BJ (cell line): ENCODE measurements at regions of chr13 and their contacts with region 1.

Region 1: DNA sequence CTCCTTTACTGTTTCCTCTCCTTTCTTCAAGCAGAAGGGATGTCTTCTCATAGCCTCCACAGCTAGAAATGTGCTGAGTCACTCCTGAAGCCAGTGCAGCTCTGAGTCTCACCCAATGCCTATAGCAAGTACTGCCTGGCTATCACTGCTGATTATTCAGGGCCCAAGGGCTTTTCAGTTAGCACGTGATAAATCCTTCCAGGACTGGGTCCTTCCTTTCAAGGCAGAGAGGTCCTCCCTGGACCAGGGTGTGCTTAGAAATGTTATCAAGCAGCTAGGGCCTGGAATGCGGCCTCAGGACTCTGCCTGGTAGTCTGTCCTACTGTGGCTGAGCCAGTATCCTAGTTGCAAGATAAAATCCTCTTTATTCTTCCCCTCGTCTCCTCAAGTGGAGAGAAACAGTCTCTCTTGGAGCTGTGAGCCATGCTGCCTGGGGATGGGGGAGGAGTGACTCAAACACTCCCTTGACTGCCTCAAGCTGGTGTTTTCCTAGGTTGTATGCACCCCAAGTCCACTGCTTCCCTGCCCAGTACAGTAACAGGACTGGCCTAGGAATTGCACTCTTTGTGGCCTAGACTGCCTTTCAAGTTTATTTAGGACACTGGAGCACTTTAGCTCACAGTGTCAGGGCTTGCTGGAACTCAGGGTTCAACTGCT is 198.7 kb upstream of the SERP2 start:
- DNase-seq: no peak
- H3K4me3 ChIP-seq: no peak overlapping the region
- H3K27me3 ChIP-seq: 0 out of 2 replicates have a peak, but pooled peaks cover 2% of the 10 kb centered on the region
- CTCF ChIP-seq: no peak

Region 2: DNA sequence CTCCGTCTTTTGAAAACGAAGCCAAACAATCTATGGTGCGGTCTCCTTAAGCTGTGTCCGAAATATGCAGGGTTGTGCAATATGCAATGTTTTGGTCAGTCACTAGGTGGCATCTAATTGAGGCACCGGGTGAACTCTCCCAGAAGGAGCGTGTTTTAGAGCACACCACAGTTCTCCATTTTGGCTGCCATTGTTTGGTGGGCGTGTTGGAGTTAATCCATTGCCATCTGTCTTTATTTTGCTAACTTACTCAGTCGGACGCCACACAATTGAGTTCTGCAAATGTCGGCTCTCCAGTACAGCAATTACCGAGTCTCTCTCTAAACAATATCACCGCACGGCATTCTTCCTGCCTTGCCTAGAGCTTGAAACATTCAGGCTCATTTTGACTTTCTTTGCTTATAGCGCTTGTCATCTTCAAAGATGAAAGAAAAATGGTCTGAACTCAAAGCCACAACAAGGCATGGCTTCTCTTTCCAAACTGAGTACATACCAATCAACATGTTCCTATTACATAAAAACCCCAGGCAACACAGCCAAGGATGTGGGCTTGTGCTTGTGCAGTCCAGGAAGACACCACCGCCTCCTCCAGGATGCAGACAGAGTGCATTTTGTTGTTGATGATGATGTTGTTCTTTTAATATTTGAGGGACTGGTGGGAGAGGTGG is 16.7 kb after region 1 on chr13:
- CTCF ChIA-PET with region 1: interaction called, 13 read pairs
- POLR2A ChIA-PET with region 1: no interaction called
- DNase-seq: peak; percentile 46
- H3K4me3 ChIP-seq: no peak overlapping the region
- H3K27me3 ChIP-seq: peaks cover 3% of the 10 kb centered on the region
- CTCF ChIP-seq: peak; percentile 77

Region 3: DNA sequence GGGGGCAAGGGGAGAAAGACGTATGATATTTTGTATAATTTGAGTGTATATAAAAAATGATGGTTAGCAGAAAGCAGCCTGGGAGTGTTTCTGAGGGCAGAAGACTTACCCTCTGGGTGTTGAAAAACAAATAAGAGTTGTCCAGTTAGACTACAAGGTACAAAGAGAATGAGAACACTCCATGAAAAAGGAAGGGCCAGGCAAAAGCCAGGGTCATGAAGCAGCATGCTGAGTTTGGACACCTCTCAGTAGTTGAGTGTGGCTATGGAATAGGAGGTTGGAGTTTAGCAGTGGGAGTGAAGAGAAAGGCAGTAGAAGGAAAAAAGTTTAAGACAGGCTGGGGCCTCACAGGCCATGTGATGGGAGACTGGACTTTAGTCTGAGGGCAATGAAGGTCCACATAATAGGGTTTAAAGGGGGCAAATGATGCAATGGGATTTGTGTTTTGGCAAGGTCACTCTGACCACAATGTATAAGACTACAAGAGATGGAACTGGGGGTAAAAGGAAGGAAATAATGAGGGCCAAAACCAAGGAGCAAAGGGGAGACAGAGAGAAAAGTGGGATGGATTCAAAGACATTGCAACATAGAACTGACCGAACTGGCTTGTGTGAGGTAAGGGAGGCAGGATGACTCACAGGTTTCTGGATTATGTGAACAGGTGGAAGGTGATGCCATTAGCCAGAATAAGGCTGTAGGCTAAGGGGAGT is 275.3 kb after region 1 on chr13:
- CTCF ChIA-PET with region 1: no interaction called
- POLR2A ChIA-PET with region 1: no interaction called
- DNase-seq: no peak
- H3K4me3 ChIP-seq: no peak overlapping the region
- H3K27me3 ChIP-seq: no peaks in the 10 kb centered on the region
- CTCF ChIP-seq: no peak

Region 4: DNA sequence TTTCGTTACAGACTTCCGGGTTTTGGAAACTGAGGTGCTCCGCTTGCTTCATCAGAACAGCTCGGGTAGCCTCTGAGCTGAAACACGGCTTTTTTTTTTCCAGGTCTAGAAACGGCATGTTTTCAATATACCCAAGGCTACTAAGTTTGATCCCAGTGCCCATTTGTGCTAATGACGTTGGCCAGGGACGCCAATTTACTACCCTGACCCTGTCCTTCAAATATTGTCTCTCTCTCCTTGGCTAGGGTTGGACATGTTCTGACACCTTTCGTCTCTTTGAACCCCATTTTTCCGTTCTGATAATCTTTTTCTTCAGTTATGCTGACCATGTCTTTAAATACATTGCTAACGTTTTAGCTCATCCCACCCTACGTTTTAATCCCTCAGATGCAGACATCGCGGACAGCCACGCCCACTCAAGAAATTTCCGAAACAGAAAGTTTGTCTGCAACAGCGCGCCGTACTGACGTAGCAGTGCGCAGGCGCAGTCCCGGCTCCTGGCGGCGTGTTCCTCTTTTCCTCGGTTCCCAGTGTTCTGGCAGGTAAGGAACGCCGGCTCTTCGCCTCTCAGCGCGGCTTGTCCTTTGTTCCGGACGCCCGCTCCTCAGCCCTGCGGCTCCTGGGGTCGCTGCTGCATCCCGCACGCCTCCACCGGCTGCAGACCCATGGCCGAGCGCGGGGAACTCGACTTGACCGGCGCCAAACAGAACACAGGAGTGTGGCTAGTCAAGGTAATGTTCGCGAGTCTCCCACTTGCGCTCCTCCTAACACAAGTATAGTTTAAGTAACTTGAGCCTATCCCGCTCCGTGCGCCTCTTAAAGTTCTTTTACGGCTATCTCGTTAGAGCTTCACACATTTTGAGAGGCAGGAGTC is 945.3 kb after region 1 on chr13 and contains the start of gene GTF2F2:
- CTCF ChIA-PET with region 1: no interaction called
- POLR2A ChIA-PET with region 1: no interaction called
- DNase-seq: peak; percentile 55
- H3K4me3 ChIP-seq: peak within 1 kb of the TSS; percentile 80
- H3K27me3 ChIP-seq: no peaks in the 10 kb centered on the region
- CTCF ChIP-seq: no peak
- polyA plus RNA-seq, gene GTF2F2: 7.9 and 14.6 TPM in 2 replicates